Heart right ventricle (tissue), 16 donors: ENCODE measurements at regions of chr15 and their contacts with region 1.

Region 1: DNA sequence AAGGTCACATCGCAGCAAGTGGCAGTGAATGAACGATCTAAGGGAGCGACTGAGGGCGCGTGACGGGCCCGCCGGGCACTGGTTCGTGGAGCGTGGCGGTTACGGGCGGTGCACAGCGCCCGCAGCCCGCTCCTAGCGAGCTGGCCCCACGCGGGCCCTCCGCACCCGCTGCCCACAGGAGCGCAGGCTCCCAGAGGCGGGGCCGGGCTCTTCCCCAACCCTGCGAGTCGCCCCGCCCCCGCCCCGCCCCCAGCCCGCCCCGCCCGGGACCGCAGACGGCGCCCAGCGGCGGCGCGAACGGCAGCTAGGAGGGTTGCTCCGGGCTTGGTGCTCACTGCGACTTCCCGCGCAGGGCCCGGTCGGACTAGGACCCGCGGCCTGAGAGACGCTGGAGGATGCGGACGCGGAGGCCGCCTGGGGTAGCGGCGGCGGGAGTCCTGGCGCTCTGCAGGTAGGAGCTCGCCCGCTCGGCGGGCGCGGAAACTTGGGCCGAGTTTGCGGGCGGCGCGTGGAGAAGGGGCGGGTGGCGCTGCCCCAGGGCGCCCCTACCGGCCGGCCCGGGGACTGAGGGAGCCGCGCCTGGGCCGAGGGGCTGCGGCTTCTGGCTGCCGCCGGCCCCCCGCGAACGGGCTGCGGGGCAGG is at the start of gene C15orf39:
- DNase-seq: peak; percentile 63 to 80
- ATAC-seq: peak; percentile 66 to 84 (median 76)
- H3K4me3 ChIP-seq: peak within 1 kb of the TSS; percentile 60 to 100 (median 88)
- H3K27ac ChIP-seq: peak within 1 kb of the TSS; percentile 89 to 100 (median 96)
- H3K4me1 ChIP-seq: peaks cover 31 to 78% (median 65%) of the 10 kb centered on the region in 9 donors
- H3K27me3 ChIP-seq: no peaks in the 10 kb centered on the region
- CTCF ChIP-seq: peak; percentile 75 to 96 (median 94)
- total RNA-seq, gene C15orf39: 6.9 to 23.7 (median 14.8) TPM

Region 2: DNA sequence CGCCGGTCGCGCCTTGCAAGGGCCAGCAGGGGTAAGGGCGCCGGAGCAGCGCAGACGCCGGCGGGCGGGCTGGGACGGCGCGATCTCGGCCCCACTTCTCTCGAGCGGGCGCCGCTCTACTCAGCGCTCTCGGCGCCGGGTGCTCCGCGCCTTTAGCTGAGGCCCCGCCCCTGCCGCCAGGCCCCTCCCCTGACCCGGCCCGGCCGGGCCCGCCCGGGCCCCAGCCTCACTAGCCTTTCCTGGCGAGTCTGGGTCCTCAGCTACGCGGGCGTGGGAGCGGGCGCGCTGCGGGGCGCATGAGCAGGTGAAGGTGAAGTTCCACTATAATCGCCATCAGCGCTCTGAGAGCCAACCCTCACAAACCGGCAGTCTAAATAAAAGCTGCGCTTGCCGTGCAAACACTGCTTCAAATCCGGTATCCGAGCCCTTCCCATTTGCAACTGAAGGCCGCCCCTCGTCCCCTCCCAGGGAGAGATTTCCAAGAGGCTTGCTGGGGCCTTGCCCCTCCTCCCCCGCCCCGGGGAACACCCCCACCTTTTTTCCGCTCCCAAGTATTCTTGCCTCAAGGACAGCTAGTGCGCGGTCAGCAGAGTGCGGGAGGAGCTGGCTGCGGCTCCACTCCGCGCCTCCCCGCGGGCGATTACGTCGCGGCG is 245.0 kb before region 1 on chr15 and contains the start of gene RPP25:
- intact Hi-C with region 1: loop called in 3 of 10 experiments (anchors 5 kb)
- DNase-seq: peak; percentile 63 to 83
- ATAC-seq: peak; percentile 83 to 93 (median 89)
- H3K4me3 ChIP-seq: peak within 1 kb of the TSS; percentile 23 to 83 (median 60)
- H3K27ac ChIP-seq: peak within 1 kb of the TSS; percentile 19 to 87 (median 76)
- H3K4me1 ChIP-seq: peaks cover 0 to 62% (median 33%) of the 10 kb centered on the region in 9 donors
- H3K27me3 ChIP-seq: peaks cover 0 to 49% (median 16%) of the 10 kb centered on the region in 7 donors
- CTCF ChIP-seq: no peak
- total RNA-seq, gene RPP25: 0.83 to 3.0 (median 1.3) TPM

Region 3: GRCh38 chr15:75029378-75030022 is 172.2 kb before region 1 on chr15:
- intact Hi-C with region 1: loop called in 9 of 10 experiments (anchors 1 to 5 kb)
- DNase-seq: peak; percentile 93 to 94
- ATAC-seq: peak; percentile 83 to 94 (median 90)
- H3K4me3 ChIP-seq: peak overlapping the region in 7 of 10 donors; percentile 12 to 40 (median 32)
- H3K27ac ChIP-seq: peak overlapping the region; percentile 4 to 89 (median 82)
- H3K4me1 ChIP-seq: peaks cover 13 to 66% (median 46%) of the 10 kb centered on the region in 9 donors
- H3K27me3 ChIP-seq: no peaks in the 10 kb centered on the region
- CTCF ChIP-seq: peak; percentile 84 to 97 (median 95)

Region 4: DNA sequence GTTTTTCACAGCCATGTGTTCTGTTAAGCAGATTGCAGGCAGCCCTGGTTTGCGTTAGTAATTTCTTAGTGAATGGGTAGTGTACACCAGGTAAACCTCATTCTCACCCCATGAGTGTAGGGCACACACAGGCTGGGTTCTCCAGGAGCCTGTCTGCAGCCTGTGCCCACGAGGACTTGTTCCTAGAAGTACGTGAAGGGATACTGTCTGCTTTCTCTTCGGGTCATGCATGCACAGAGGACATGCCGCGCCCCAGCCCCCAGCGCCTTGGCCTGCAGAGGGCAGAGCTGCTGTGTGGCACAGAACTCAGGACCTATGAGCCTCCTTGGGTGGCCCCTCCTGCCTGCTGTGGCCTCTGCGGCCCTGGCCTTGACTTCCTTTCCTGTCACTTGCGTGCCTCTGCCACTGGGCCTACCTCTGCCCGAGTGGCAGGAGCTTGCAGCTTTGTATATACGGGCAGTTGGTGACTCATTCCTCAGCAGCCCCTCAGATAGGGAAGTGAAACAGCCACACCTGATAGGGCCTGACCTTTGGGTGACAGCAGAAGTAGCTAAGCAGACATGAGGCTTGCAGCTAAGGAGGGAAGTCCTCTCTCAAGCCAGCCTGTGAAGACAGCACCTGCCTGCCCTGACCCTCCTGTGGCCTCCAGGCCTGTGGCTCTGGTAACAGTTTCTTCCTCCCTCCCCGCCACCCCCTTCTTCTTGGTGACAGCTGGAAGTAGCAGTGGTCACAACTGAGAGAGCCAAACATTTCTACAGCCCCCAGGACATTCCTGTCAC is 158.8 kb before region 1 on chr15:
- intact Hi-C with region 1: loop called in 7 of 10 experiments (anchors 1 to 5 kb)
- DNase-seq: peak; percentile 83
- ATAC-seq: peak; percentile 44 to 79 (median 68)
- H3K4me3 ChIP-seq: peak overlapping the region in 2 of 10 donors; percentile 28 to 32
- H3K27ac ChIP-seq: peak overlapping the region; percentile 82 to 98 (median 92)
- H3K4me1 ChIP-seq: peaks cover 43 to 92% (median 65%) of the 10 kb centered on the region in 9 donors
- H3K27me3 ChIP-seq: no peaks in the 10 kb centered on the region
- CTCF ChIP-seq: peak; percentile 36 to 79 (median 65)

Region 5: DNA sequence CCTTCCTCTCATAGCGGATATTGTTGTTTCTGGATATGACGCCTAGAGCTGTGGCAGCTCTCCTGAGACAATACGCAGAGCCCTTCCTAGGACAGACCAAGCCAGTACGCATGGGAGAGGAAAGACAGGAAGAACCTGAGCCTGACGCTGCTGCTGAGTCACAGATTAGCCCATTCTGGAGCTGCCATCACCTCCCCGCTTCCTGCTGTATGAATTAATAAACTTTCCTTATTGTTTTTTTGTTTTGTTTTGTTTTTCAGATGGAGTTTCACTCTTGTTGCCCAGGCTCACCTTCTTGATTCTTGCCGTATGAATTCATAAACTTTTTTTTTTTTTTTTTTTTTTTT is 111.4 kb before region 1 on chr15:
- intact Hi-C with region 1: loop called in 1 of 10 experiments (anchors 5 kb)
- DNase-seq: peak; percentile 32 to 79
- ATAC-seq: peak; percentile 95 to 100 (median 98)
- H3K4me3 ChIP-seq: peak overlapping the region in 2 of 10 donors; percentile 2 to 10
- H3K27ac ChIP-seq: peak overlapping the region; percentile 61 to 91 (median 80)
- H3K4me1 ChIP-seq: peaks cover 0 to 18% (median 6%) of the 10 kb centered on the region in 9 donors
- H3K27me3 ChIP-seq: no peaks in the 10 kb centered on the region
- CTCF ChIP-seq: no peak

Region 6: DNA sequence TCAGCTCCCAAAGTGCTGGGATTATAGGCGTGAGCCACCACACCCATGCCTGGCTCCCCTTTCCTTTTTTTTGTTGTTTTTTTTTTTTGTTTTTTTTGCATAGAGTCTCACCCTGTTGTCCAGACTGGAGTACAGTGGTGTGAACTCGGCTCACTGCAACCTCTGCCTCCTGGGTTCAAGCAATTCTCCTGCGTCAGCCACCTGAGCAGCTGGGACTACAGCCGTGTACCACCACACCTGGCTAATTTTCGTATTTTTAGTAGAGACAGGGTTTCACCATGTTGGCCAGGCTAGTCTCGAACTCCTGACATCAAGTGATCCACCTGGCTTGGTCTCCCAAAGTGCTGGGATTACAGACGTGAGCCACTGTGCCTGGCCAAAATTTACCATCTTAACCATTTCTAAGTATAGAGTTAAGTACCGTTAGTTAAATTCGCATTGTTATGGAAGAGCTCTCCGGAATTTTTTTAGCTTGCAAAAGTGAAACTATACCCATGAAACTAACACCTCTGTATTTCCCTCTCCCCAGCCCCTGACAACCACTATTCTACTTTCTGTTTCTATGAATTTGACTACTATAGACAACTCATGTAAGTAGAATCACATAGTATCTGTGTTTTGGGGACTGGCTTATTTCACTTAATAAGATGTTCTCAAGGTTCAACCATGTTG is 71.0 kb before region 1 on chr15:
- intact Hi-C with region 1: loop called in 2 of 10 experiments (anchors 5 to 10 kb)
- DNase-seq: no peak
- ATAC-seq: peak in 2 of 8 donors; percentile 24 to 62
- H3K4me3 ChIP-seq: peak overlapping the region in 1 of 10 donors; percentile 20
- H3K27ac ChIP-seq: peak overlapping the region in 3 of 10 donors; percentile 29 to 81 (median 44)
- H3K4me1 ChIP-seq: peaks cover 0 to 51% (median 0%) of the 10 kb centered on the region in 9 donors
- H3K27me3 ChIP-seq: no peaks in the 10 kb centered on the region
- CTCF ChIP-seq: no peak